Mammary epithelial cell (primary cell): ENCODE measurements at regions of chr1 and their contacts with region 1.

Region 1: DNA sequence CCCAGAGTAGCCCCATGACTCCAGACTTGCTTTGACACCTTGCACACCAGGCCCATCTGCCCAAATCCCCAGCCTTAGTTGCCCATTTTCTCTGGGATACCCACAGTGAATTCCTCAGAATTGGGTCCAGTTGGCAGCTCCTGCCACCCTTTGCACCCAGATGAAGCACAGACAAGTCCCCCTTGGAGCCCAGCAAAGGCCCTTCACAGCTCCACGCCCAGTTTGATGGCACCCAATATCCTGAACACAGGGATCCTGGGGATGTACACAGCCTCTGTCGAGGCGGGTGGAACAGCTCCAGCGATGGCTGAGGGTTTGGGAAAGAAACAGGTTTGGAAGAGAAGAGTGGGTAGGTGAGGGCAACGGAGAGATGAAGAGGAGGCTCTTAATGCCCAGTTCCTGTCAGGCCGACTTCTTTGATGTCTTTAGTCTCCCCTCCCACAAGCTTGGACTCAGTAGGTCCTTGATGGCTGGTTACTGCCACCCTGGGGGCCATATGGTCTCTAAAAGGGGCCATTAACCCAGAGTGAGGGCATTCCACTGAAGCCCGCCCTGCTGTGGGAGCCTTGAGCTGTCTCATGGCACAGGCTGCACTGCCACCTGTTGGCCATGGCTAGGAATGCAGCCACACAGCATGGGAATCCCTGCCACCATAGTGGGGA is 21.7 kb downstream of the TMEM53 start:
- DNase-seq: peak; percentile 47
- H3K4me3 ChIP-seq: no peak overlapping the region
- H3K27ac ChIP-seq: no peak overlapping the region
- H3K4me1 ChIP-seq: no peaks in the 10 kb centered on the region
- H3K27me3 ChIP-seq: no peaks in the 10 kb centered on the region
- CTCF ChIP-seq: peak; percentile 98

Region 2: GRCh38 chr1:44084998-44085675 is 567.4 kb before region 1 on chr1:
- CTCF ChIA-PET with region 1: no interaction called
- dilution Hi-C with region 1: no loop called
- in situ Hi-C with region 1: no loop called
- intact Hi-C with region 1: loop called (anchors 5 kb)
- DNase-seq: peak; percentile 44
- H3K4me3 ChIP-seq: no peak overlapping the region
- H3K27ac ChIP-seq: no peak overlapping the region
- H3K4me1 ChIP-seq: peaks cover 9% of the 10 kb centered on the region
- H3K27me3 ChIP-seq: no peaks in the 10 kb centered on the region
- CTCF ChIP-seq: no peak

Region 3: GRCh38 chr1:44318097-44319088 is 334.2 kb before region 1 on chr1:
- CTCF ChIA-PET with region 1: no interaction called
- dilution Hi-C with region 1: no loop called
- in situ Hi-C with region 1: no loop called
- intact Hi-C with region 1: loop called (anchors 5 kb)
- DNase-seq: peak; percentile 24
- H3K4me3 ChIP-seq: no peak overlapping the region
- H3K27ac ChIP-seq: no peak overlapping the region
- H3K4me1 ChIP-seq: no peaks in the 10 kb centered on the region
- H3K27me3 ChIP-seq: no peaks in the 10 kb centered on the region
- CTCF ChIP-seq: peak; percentile 76 to 81

Region 4: GRCh38 chr1:44377925-44378784 is 274.4 kb before region 1 on chr1:
- CTCF ChIA-PET with region 1: interaction called, 5 read pairs
- dilution Hi-C with region 1: no loop called
- in situ Hi-C with region 1: no loop called
- intact Hi-C with region 1: loop called (anchors 1 kb)
- DNase-seq: peak; percentile 15
- H3K4me3 ChIP-seq: no peak overlapping the region
- H3K27ac ChIP-seq: no peak overlapping the region
- H3K4me1 ChIP-seq: no peaks in the 10 kb centered on the region
- H3K27me3 ChIP-seq: peaks cover 4% of the 10 kb centered on the region
- CTCF ChIP-seq: peak; percentile 75 to 81

Region 5: GRCh38 chr1:44609412-44609767 is 43.2 kb before region 1 on chr1:
- CTCF ChIA-PET with region 1: interaction called, 6 read pairs
- dilution Hi-C with region 1: no loop called
- in situ Hi-C with region 1: no loop called
- intact Hi-C with region 1: loop called (anchors 1 kb)
- DNase-seq: no peak
- H3K4me3 ChIP-seq: no peak overlapping the region
- H3K27ac ChIP-seq: no peak overlapping the region
- H3K4me1 ChIP-seq: no peaks in the 10 kb centered on the region
- H3K27me3 ChIP-seq: no peaks in the 10 kb centered on the region
- CTCF ChIP-seq: peak; percentile 40 to 53

Region 6: GRCh38 chr1:44677201-44677766 is 24.7 kb after region 1 on chr1:
- CTCF ChIA-PET with region 1: no interaction called
- dilution Hi-C with region 1: no loop called
- in situ Hi-C with region 1: no loop called
- intact Hi-C with region 1: loop called (anchors 1 kb)
- DNase-seq: peak; percentile 38
- H3K4me3 ChIP-seq: no peak overlapping the region
- H3K27ac ChIP-seq: no peak overlapping the region
- H3K4me1 ChIP-seq: peaks cover 18% of the 10 kb centered on the region
- H3K27me3 ChIP-seq: no peaks in the 10 kb centered on the region
- CTCF ChIP-seq: peak; percentile 59 to 71